ENCODE measurements at regions of chr2 and their contacts with region 1.

Region 1: DNA sequence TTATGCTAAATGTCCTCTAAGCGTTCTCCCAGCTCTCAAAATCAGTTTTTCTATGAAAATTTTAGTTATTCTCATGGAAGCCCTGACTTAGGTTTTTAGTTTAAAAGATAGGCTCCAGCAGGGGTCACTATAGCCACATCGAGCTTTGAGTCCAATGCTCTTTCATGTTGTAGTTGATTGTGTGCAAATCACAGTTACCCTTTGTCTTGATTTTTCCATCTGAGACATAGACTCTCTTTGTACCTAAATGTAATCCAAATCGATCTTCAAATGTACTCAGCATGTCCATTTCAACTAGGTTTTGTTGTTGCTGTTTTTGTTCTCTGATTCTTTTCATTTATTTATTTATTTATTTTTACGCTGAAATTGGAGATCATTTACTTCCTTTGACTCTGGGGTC is 26.4 kb upstream of the MSTN start:
- DNase-seq: peak in 4 of 10 donors; percentile 20 to 56 (median 38)

Region 2: GRCh38 chr2:190121971-190122370 is 33.1 kb after region 1 on chr2:
- intact Hi-C with region 1: loop called (anchors 2 kb)
- DNase-seq: no peak

Region 3: GRCh38 chr2:190149908-190150307 is 61.0 kb after region 1 on chr2:
- intact Hi-C with region 1: no loop called
- DNase-seq: peak in 1 of 10 donors; percentile 21

Region 4: DNA sequence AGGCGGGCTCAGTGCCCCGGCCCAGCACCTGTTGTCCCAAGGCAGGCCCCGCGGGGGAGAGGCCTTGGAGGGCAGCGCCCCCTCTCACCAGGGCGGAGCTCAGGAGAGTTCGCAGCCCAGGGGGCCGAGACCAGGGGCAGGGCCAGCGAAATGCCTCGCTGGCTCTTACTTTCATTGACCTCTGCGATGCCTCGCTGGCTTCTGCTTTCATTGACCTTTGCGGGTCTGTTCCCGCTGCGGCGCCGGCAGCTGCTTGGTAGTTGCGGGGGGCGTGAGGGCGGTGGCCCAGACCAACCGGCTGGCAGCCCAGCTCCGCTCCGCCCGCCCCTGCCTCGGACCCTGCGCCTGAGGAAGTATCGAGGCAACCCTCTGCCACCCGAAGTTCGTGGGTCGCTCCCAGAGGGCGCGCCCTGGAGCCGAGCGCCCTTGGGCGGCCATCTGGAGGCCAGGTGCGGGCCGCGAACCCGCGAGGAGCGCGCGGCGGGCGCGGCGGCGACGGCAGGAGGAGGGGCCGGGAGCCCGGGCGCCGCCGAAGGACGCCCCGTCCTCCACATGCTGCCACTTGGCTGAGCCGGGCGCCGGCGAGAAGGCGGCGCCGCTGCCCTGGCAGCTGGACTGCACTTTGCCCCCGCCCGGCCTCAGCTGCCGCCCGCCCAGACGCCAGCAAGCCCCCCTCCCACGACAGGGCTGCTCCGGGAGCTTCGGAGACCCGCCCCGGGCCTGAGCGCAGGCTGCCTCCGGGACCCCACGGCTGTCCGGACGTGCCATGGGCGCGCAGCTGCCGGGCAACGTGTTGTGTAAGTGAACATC is 91.6 kb after region 1 on chr2:
- intact Hi-C with region 1: loop called (anchors 5 kb)
- DNase-seq: peak; percentile 37 to 94 (median 54)

Region 5: GRCh38 chr2:190277234-190278112 is 188.6 kb after region 1 on chr2:
- intact Hi-C with region 1: loop called (anchors 5 kb)
- DNase-seq: no peak

Region 6: GRCh38 chr2:190319555-190320498 is 230.9 kb after region 1 on chr2 and contains the start of gene HIBCH:
- intact Hi-C with region 1: loop called (anchors 5 kb)
- DNase-seq: peak; percentile 98 to 100 (median 98)

Region 7: DNA sequence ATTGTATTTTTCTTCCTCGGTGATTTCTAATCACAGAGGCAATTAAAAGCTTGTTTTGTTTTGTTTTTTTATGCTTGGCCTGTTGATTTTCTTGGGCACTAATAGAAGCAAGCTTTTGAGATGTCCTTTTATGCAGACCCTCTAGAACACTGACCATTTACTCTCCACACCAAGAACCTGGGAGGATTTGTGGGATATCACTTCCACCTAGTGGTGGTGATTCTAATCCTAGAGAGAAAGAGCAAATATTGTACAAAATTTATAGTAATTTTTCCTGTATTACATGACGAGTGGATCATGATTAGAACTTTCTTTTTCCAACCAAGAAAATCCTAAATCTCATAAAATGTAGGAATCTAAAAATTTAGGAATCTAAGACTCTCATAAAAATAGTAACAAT is 422.2 kb after region 1 on chr2:
- intact Hi-C with region 1: loop called (anchors 5 kb)
- DNase-seq: no peak